Activated naive CD4-positive, alpha-beta T cell treated with anti-CD3 and anti-CD28 coated beads for 36 hours (primary cell): ENCODE measurements at regions of chr2 and their contacts with region 1.

Region 1: GRCh38 chr2:7930800-7931635 is 750.8 kb upstream of the ID2 start:
- DNase-seq: peak; percentile 45
- H3K4me3 Mint-ChIP-seq: no peak overlapping the region
- H3K27ac Mint-ChIP-seq: peak overlapping the region; percentile 74
- H3K4me1 Mint-ChIP-seq: peaks cover 19% of the 10 kb centered on the region
- H3K27me3 Mint-ChIP-seq: no peaks in the 10 kb centered on the region

Region 2: GRCh38 chr2:7845332-7845731 is 85.7 kb before region 1 on chr2:
- CTCF ChIA-PET with region 1: no interaction called
- intact Hi-C with region 1: loop called (anchors 1 kb)
- DNase-seq: no peak
- H3K4me3 Mint-ChIP-seq: no peak overlapping the region
- H3K27ac Mint-ChIP-seq: no peak overlapping the region
- H3K4me1 Mint-ChIP-seq: peaks cover 19% of the 10 kb centered on the region
- H3K27me3 Mint-ChIP-seq: peaks cover 5% of the 10 kb centered on the region

Region 3: GRCh38 chr2:7943446-7943845 is 12.4 kb after region 1 on chr2:
- CTCF ChIA-PET with region 1: no interaction called
- intact Hi-C with region 1: loop called (anchors 1 kb)
- DNase-seq: no peak
- H3K4me3 Mint-ChIP-seq: no peak overlapping the region
- H3K27ac Mint-ChIP-seq: no peak overlapping the region
- H3K4me1 Mint-ChIP-seq: peaks cover 4% of the 10 kb centered on the region
- H3K27me3 Mint-ChIP-seq: no peaks in the 10 kb centered on the region

Region 4: GRCh38 chr2:7984693-7985353 is 53.8 kb after region 1 on chr2:
- CTCF ChIA-PET with region 1: no interaction called
- intact Hi-C with region 1: loop called (anchors 1 kb)
- DNase-seq: peak; percentile 22
- H3K4me3 Mint-ChIP-seq: peak overlapping the region; percentile 8
- H3K27ac Mint-ChIP-seq: peak overlapping the region; percentile 62
- H3K4me1 Mint-ChIP-seq: peaks cover 20% of the 10 kb centered on the region
- H3K27me3 Mint-ChIP-seq: peaks cover 4% of the 10 kb centered on the region

Region 5: GRCh38 chr2:8154936-8155335 is 223.9 kb after region 1 on chr2:
- CTCF ChIA-PET with region 1: no interaction called
- intact Hi-C with region 1: loop called (anchors 2 kb)
- DNase-seq: peak; percentile 68
- H3K4me3 Mint-ChIP-seq: no peak overlapping the region
- H3K27ac Mint-ChIP-seq: peak overlapping the region; percentile 78
- H3K4me1 Mint-ChIP-seq: peaks cover 16% of the 10 kb centered on the region
- H3K27me3 Mint-ChIP-seq: no peaks in the 10 kb centered on the region